ENCODE measurements at regions of chr17 and their contacts with region 1.

Region 1: GRCh38 chr17:78708510-78708973 is 73.5 kb downstream of the CYTH1 start:
- DNase-seq: peak; percentile 86
- H3K4me3 ChIP-seq: no peak overlapping the region
- H3K27ac ChIP-seq: peak overlapping the region in 1 of 2 experiments; percentile 83; a peak in 2 of 4 replicates
- H3K4me1 ChIP-seq: peaks cover 9 to 66% of the 10 kb centered on the region in 2 experiments
- H3K27me3 ChIP-seq: no peaks in the 10 kb centered on the region
- CTCF ChIP-seq: peak; percentile 99
- EP300 ChIP-seq: no peak
- RAD21 ChIP-seq: peak; percentile 100

Region 2: DNA sequence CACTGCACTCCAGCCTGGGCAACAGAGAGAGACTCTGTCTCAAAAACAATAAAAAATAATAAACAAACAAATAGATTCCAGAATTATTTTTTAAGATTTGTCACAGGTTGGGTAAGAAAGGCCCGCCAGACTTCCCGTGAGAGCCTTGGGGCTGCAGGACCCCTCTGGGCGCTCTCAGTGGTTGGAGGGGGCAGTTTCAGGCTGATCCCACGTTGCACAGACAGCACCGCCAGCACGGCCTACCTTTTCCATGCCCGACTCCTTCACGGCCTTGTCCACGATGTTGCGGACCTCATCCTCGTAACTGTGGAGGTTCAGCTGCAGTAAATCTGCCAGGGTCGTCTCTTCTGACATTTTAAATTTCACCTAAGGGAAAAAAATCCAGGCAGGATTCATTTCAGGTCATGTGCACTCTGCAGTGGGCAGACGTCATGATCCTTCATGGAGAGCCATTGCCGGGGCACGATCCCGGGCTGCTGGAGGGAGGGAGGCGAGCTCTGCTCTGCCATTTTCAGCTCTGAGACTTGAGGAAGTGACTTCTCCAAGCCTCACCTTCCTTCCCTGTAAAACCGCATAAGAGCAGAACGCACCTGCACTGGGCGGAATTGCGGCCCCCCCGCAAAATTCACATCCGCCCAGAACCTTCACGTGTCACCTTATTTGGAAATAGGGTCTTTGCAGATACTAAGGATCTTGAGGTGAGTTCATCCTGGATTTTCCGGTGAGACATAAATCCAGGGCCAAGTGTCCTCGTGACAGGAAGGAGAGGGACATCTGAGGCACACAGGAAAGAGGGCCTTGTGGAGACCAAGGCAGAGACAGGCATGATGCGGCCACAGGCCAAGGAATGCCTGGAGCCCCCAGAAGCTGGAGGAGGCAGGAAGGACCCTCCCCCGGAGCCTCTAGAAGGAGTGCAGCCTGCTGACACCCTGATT is 198.1 kb before region 1 on chr17:
- CTCF ChIA-PET with region 1: interaction called, 32 read pairs
- POLR2A ChIA-PET with region 1: no interaction called
- DNase-seq: no peak
- H3K4me3 ChIP-seq: no peak overlapping the region
- H3K27ac ChIP-seq: no peak overlapping the region
- H3K4me1 ChIP-seq: no peaks in the 10 kb centered on the region; a peak in 1 of 4 replicates
- H3K27me3 ChIP-seq: 0 out of 2 replicates have a peak, but pooled peaks cover 6% of the 10 kb centered on the region
- CTCF ChIP-seq: no peak
- EP300 ChIP-seq: no peak
- RAD21 ChIP-seq: no peak

Region 3: DNA sequence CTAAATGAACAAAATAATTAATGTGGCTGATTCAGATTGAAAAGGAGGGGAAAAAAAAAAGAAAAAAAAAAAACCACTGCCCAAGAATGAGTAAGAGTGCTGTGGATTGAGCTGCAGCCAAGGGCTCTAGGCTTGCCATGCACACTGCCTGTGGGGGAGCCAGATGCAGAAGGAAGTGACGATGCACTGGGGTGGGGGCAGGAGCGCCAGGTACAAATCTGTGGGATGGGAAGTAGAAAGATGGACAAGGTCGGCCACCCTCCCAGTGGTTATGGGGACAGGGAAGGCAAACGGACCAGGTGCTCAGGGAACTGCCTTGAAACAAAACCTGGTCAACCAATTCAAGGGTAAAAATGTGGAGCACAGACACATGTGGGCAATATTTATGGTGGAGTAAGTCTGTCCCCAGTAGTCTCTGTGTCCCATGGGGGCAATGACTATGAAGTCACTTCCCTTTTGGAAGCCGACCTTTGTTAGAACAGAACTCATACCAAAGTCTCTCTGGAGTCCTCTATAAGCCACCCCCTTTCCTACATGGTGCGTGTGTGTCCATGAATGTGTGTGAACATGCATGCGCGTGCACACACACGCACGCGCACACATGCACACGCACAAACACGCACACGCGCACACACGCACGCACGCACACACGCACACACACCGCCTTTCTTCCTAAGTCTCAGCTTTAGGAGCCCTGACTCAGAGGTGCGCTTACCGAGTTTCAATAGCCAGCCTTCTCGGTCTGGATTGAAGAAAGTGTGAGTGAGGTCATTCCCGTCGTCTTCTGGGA is 10.8 kb before region 1 on chr17:
- CTCF ChIA-PET with region 1: interaction called, 26 read pairs
- POLR2A ChIA-PET with region 1: interaction called, 3 read pairs
- DNase-seq: no peak
- H3K4me3 ChIP-seq: no peak overlapping the region
- H3K27ac ChIP-seq: peak overlapping the region in 1 of 2 experiments; percentile 6; a peak in 1 of 4 replicates
- H3K4me1 ChIP-seq: peaks cover 0 to 13% of the 10 kb centered on the region in 2 experiments; a peak in 1 of 4 replicates
- H3K27me3 ChIP-seq: no peaks in the 10 kb centered on the region
- CTCF ChIP-seq: no peak
- EP300 ChIP-seq: no peak
- RAD21 ChIP-seq: no peak

Region 4: GRCh38 chr17:78736526-78737079 is 28.1 kb after region 1 on chr17:
- CTCF ChIA-PET with region 1: interaction called, 104 read pairs
- POLR2A ChIA-PET with region 1: no interaction called
- DNase-seq: no peak
- H3K4me3 ChIP-seq: no peak overlapping the region
- H3K27ac ChIP-seq: peak overlapping the region; percentile 83 to 85
- H3K4me1 ChIP-seq: peaks cover 33 to 54% of the 10 kb centered on the region in 2 experiments
- H3K27me3 ChIP-seq: no peaks in the 10 kb centered on the region
- CTCF ChIP-seq: no peak
- EP300 ChIP-seq: no peak
- RAD21 ChIP-seq: no peak

Region 5: GRCh38 chr17:78781948-78782916 is 73.7 kb after region 1 on chr17 and contains the start of gene CYTH1:
- CTCF ChIA-PET with region 1: interaction called, 11 read pairs
- POLR2A ChIA-PET with region 1: no interaction called
- DNase-seq: peak; percentile 100
- H3K4me3 ChIP-seq: peak within 1 kb of the TSS; percentile 63 to 91
- H3K27ac ChIP-seq: peak within 1 kb of the TSS; percentile 76 to 87
- H3K4me1 ChIP-seq: peaks cover 0 to 3% of the 10 kb centered on the region in 2 experiments; a peak in 1 of 4 replicates
- H3K27me3 ChIP-seq: no peaks in the 10 kb centered on the region
- CTCF ChIP-seq: no peak
- EP300 ChIP-seq: no peak
- RAD21 ChIP-seq: no peak
- polyA plus RNA-seq, gene CYTH1: 23.8 and 24.8 TPM in 2 replicates

Region 6: DNA sequence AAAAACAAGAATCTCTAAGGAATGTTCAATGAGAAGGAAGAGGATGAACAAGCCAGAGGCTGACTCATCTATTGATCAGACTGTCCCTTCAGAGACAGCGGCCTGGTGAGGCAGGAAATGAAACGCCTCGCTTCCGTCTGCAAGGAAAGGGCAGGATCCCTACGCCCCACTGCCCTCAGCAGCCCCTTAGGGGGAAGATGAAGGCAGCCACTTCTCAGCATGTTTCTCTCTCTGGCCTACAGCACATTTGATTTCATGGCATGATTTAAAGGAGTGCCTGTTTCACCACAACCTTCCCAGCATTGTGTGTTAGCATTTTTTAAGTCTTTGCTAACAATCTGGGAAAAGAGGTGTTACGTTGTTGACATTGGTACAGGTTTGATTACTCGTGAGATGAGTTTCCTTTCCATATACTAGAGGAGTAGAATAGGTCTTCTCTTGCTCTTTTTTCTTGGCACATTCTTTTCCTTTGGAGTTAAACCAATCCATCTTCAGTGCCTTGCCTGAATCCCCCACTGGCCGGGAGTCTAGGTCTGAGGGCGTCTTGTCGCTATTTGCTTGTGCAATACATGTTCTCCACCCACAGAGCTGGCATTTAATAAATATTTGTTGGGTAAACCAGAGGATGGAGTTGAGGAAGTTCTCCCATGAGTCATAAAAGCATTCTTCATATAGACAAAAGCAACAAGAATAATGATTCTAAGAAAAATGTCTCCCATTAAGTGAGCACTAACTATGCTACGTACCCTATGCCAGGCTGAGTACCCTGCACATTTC is 854.9 kb after region 1 on chr17:
- CTCF ChIA-PET with region 1: no interaction called
- POLR2A ChIA-PET with region 1: no interaction called
- DNase-seq: no peak
- H3K4me3 ChIP-seq: no peak overlapping the region
- H3K27ac ChIP-seq: no peak overlapping the region
- H3K4me1 ChIP-seq: peaks cover 0 to 17% of the 10 kb centered on the region in 2 experiments; a peak in 1 of 4 replicates
- H3K27me3 ChIP-seq: peaks cover 17% of the 10 kb centered on the region; the same call in 1 of the 2 replicates
- CTCF ChIP-seq: no peak
- EP300 ChIP-seq: no peak
- RAD21 ChIP-seq: no peak